Ovary (tissue), 10 donors: ENCODE measurements at regions of chr16 and their contacts with region 1.

Region 1: DNA sequence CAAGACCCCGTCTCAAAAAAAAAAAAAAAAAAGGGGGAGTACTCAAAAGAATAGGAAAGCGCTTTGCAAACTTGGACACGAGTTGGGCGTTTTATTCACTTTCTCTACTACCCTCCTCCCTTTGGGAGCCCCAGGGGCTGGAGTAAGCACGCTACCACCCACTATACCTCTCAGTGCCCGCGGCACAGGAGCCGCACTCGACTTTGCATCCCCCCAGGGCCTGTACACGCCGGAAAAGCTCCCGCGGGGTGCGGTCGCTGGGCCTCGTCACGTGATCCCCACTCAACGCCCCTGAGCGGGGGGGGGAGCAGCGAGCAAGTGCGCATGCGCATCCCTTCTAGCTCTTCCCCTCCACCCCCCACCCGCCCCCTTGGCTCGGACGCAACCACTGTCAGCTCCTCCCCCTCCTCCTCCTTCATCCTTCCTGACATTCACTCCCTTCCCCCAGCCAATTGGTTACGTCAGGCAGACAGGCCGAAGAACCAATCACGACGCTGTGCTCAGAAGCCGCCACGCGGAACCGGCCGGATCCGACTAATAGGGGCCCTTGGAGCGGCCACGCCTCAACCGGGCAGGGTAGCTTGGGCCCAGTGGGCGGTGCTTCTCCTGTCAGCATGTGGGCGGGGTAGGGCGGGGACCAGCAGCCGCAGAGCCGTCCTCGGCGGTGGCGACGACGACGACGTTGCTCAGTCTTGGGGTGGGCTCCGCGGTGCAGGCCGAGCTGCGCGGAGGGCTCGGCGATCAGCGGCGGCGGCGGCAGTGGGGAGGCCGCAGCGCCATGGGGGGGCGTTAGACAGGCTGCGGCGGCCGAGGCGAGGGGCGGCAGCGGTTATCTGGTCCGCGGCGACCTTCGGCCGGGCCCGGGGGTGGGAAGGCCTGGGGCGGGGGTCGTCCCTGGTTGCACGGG is at the start of gene HAPSTR1:
- DNase-seq: peak; percentile 98 to 100 (median 100)
- H3K4me3 ChIP-seq: peak within 1 kb of the TSS; percentile 98
- H3K27ac ChIP-seq: peak within 1 kb of the TSS; percentile 97 to 99
- H3K4me1 ChIP-seq: peaks cover 6% of the 10 kb centered on the region
- H3K27me3 ChIP-seq: no peaks in the 10 kb centered on the region
- CTCF ChIP-seq: no peak
- EP300 ChIP-seq: peak; percentile 34
- POLR2A ChIP-seq: peak; percentile 95
- total RNA-seq, gene HAPSTR1: 31.2 to 76.1 (median 57.5) TPM

Region 2: DNA sequence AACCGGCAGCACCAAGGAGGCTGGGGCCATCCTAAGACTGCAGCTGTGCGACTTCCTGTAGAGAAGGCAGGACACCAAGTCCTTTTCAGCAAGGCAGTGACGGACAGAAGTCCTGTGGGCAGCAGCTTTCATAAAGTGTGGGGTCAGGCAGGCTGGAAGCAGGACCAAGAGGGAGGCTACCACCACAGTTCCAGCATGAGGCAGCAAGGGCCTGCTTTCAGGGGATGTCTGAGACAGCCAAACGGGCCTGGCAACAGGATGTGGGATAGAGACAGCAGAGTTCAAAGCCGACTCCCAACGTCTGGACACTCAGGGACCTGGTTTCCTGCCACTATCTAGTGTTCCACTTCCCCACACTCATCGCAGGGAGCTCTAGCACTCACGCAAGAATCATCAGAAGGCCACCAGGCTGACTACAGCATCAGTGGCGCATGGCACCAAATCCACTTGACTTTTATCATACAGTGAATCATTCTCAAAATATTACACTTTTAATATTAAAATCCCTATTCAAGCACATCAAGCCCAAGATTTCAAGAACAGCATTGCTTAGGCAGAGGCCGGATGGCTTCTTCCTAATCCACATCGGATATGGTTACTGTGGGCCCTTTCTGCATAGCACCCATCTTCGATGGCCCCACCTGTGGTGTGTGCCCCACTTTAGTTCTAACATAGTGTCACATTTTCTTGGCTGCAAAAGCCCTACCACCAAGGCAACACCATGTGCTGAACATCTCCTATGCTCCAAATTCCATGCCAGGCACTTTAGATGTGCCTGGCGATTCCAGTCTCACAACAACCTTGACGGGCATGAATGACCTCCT is 132.7 kb before region 1 on chr16:
- intact Hi-C with region 1: loop called in 2 of 4 experiments (anchors 5 kb)
- DNase-seq: no peak
- H3K4me3 ChIP-seq: no peak overlapping the region
- H3K27ac ChIP-seq: no peak overlapping the region
- H3K4me1 ChIP-seq: peaks cover 41% of the 10 kb centered on the region
- H3K27me3 ChIP-seq: no peaks in the 10 kb centered on the region
- CTCF ChIP-seq: no peak
- EP300 ChIP-seq: no peak
- POLR2A ChIP-seq: no peak

Region 3: GRCh38 chr16:8963825-8964441 is 127.3 kb before region 1 on chr16 and contains the start of gene USP7:
- intact Hi-C with region 1: loop called in 2 of 4 experiments (anchors 5 kb)
- DNase-seq: peak; percentile 89 to 95 (median 90)
- H3K4me3 ChIP-seq: peak within 1 kb of the TSS; percentile 67
- H3K27ac ChIP-seq: peak within 1 kb of the TSS; percentile 63 to 70
- H3K4me1 ChIP-seq: peaks cover 14% of the 10 kb centered on the region
- H3K27me3 ChIP-seq: no peaks in the 10 kb centered on the region
- CTCF ChIP-seq: no peak
- EP300 ChIP-seq: no peak
- POLR2A ChIP-seq: peak; percentile 48
- total RNA-seq, gene USP7: 73.8 to 104 (median 98.3) TPM

Region 4: GRCh38 chr16:9279291-9280068 is 188.3 kb after region 1 on chr16:
- intact Hi-C with region 1: no loop called
- DNase-seq: no peak
- H3K4me3 ChIP-seq: no peak overlapping the region
- H3K27ac ChIP-seq: no peak overlapping the region
- H3K4me1 ChIP-seq: no peaks in the 10 kb centered on the region
- H3K27me3 ChIP-seq: no peaks in the 10 kb centered on the region
- CTCF ChIP-seq: no peak
- EP300 ChIP-seq: no peak
- POLR2A ChIP-seq: no peak